Activated CD4-positive, alpha-beta T cell treated with anti-CD3 and anti-CD28 coated beads for 36 hours (primary cell): ENCODE measurements at regions of chr2 and their contacts with region 1.

Region 1: GRCh38 chr2:16665748-16666448 is at the start of gene CYRIA:
- DNase-seq: peak; percentile 80
- ATAC-seq: peak; percentile 77
- H3K4me3 Mint-ChIP-seq: peak within 1 kb of the TSS; percentile 73
- H3K27ac Mint-ChIP-seq: peak within 1 kb of the TSS; percentile 79
- H3K4me1 Mint-ChIP-seq: peaks cover 16% of the 10 kb centered on the region
- H3K27me3 Mint-ChIP-seq: peaks cover 41% of the 10 kb centered on the region
- total RNA-seq, gene CYRIA: 2.5 to 2.8 TPM

Region 2: GRCh38 chr2:16650287-16651249 is 15.3 kb before region 1 on chr2:
- CTCF ChIA-PET with region 1: interaction called, 6 read pairs
- POLR2A ChIA-PET with region 1: no interaction called
- intact Hi-C with region 1: loop called in 1 of 2 experiments (anchors 1 kb)
- DNase-seq: no peak
- ATAC-seq: peak; percentile 6
- H3K4me3 Mint-ChIP-seq: no peak overlapping the region
- H3K27ac Mint-ChIP-seq: no peak overlapping the region
- H3K4me1 Mint-ChIP-seq: peaks cover 19% of the 10 kb centered on the region
- H3K27me3 Mint-ChIP-seq: no peaks in the 10 kb centered on the region

Region 3: DNA sequence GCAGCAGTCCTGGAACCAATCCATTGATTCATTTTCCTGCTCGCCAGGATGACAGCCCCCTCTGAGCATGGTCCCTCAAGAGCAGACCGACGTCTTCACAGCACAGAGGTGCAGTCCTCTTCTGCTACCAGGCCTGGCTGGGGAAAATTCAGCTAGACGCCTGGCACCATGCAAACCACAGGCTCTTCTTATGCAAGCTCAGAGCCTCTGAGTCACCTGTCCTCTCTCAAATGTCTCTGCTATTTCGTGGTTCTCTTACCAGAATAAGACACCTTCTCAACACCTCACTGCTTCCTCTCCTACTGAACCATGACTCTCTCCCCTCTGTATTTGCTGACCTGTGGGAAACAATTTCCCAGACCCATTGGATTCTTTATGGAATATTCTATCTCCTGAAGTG is 79.6 kb after region 1 on chr2:
- CTCF ChIA-PET with region 1: no interaction called
- POLR2A ChIA-PET with region 1: no interaction called
- intact Hi-C with region 1: loop called in 1 of 2 experiments (anchors 2 kb)
- DNase-seq: peak; percentile 62
- ATAC-seq: peak; percentile 67
- H3K4me3 Mint-ChIP-seq: no peak overlapping the region
- H3K27ac Mint-ChIP-seq: no peak overlapping the region
- H3K4me1 Mint-ChIP-seq: peaks cover 33% of the 10 kb centered on the region
- H3K27me3 Mint-ChIP-seq: peaks cover 10% of the 10 kb centered on the region